MCF 10A (cell line): ENCODE measurements at regions of chr6 and their contacts with region 1.

Region 1: GRCh38 chr6:131923356-131923755 is 27.8 kb downstream of the CCN2 start:
- DNase-seq: peak; percentile 83
- H3K4me3 Mint-ChIP-seq: no peak overlapping the region
- H3K27ac Mint-ChIP-seq: no peak overlapping the region
- H3K4me1 Mint-ChIP-seq: peaks cover 6% of the 10 kb centered on the region
- H3K27me3 Mint-ChIP-seq: no peaks in the 10 kb centered on the region
- CTCF ChIP-seq: peak; percentile 54

Region 2: GRCh38 chr6:131875647-131876046 is 47.7 kb before region 1 on chr6:
- CTCF ChIA-PET with region 1: no interaction called
- POLR2A ChIA-PET with region 1: no interaction called
- intact Hi-C with region 1: no loop called
- DNase-seq: no peak
- H3K4me3 Mint-ChIP-seq: no peak overlapping the region
- H3K27ac Mint-ChIP-seq: no peak overlapping the region
- H3K4me1 Mint-ChIP-seq: no peaks in the 10 kb centered on the region
- H3K27me3 Mint-ChIP-seq: no peaks in the 10 kb centered on the region
- CTCF ChIP-seq: no peak

Region 3: DNA sequence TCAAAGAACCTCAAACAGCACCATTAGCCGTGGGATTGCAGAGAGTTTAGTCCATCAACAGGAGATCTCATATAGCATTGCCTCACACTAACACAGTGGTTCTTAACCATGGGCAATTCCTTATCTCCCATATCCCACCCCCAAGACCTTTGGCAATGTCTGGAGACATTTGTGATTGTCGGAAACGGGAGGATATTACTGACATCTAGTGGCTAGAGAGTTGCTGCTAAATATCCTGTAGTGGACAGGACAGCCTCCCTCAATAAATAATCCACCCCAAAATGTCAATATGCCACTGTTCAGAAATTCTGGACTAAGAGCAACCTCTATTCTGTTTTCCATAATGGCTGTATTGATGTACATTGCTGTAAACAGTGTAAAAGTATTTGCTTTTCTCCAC is 237.9 kb after region 1 on chr6:
- CTCF ChIA-PET with region 1: interaction called, 42 read pairs
- POLR2A ChIA-PET with region 1: interaction called, 3 read pairs
- intact Hi-C with region 1: loop called (anchors 1 kb)
- DNase-seq: peak; percentile 51
- H3K4me3 Mint-ChIP-seq: no peak overlapping the region
- H3K27ac Mint-ChIP-seq: no peak overlapping the region
- H3K4me1 Mint-ChIP-seq: no peaks in the 10 kb centered on the region
- H3K27me3 Mint-ChIP-seq: no peaks in the 10 kb centered on the region
- CTCF ChIP-seq: peak; percentile 57

Region 4: DNA sequence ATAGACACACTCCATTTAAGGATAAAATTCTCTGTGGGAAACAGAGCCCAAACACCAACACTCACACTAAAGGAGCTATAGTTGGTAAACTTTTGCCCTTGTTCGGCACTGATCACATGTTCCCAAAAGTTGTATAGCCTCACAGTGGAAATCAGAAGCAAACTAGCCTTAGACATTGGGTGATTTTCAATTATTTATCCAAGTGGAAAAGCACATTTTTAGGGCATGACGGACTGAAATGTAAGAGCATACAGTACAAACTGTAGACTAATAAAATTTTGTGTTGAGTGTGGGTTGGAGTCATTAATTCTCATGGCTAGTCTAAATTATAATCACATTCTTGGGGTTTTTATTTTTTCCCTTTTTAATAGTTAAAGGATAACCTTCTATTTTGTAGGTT is 275.5 kb after region 1 on chr6:
- CTCF ChIA-PET with region 1: interaction called, 12 read pairs
- POLR2A ChIA-PET with region 1: no interaction called
- intact Hi-C with region 1: no loop called
- DNase-seq: no peak
- H3K4me3 Mint-ChIP-seq: no peak overlapping the region
- H3K27ac Mint-ChIP-seq: no peak overlapping the region
- H3K4me1 Mint-ChIP-seq: peaks cover 14% of the 10 kb centered on the region
- H3K27me3 Mint-ChIP-seq: no peaks in the 10 kb centered on the region
- CTCF ChIP-seq: no peak

Region 5: GRCh38 chr6:132218059-132218696 is 294.8 kb after region 1 on chr6:
- CTCF ChIA-PET with region 1: interaction called, 59 read pairs
- POLR2A ChIA-PET with region 1: no interaction called
- intact Hi-C with region 1: loop called (anchors 1 kb)
- DNase-seq: peak; percentile 45
- H3K4me3 Mint-ChIP-seq: no peak overlapping the region
- H3K27ac Mint-ChIP-seq: no peak overlapping the region
- H3K4me1 Mint-ChIP-seq: no peaks in the 10 kb centered on the region
- H3K27me3 Mint-ChIP-seq: no peaks in the 10 kb centered on the region
- CTCF ChIP-seq: peak; percentile 38

Region 6: GRCh38 chr6:132259070-132259469 is 335.7 kb after region 1 on chr6:
- CTCF ChIA-PET with region 1: interaction called, 76 read pairs
- POLR2A ChIA-PET with region 1: no interaction called
- intact Hi-C with region 1: loop called (anchors 2 kb)
- DNase-seq: peak; percentile 30
- H3K4me3 Mint-ChIP-seq: no peak overlapping the region
- H3K27ac Mint-ChIP-seq: no peak overlapping the region
- H3K4me1 Mint-ChIP-seq: peaks cover 10% of the 10 kb centered on the region
- H3K27me3 Mint-ChIP-seq: no peaks in the 10 kb centered on the region
- CTCF ChIP-seq: peak; percentile 28

Region 7: GRCh38 chr6:132300323-132300949 is 377.1 kb after region 1 on chr6:
- CTCF ChIA-PET with region 1: interaction called, 13 read pairs
- POLR2A ChIA-PET with region 1: no interaction called
- intact Hi-C with region 1: loop called (anchors 1 kb)
- DNase-seq: peak; percentile 70
- H3K4me3 Mint-ChIP-seq: no peak overlapping the region
- H3K27ac Mint-ChIP-seq: no peak overlapping the region
- H3K4me1 Mint-ChIP-seq: no peaks in the 10 kb centered on the region
- H3K27me3 Mint-ChIP-seq: no peaks in the 10 kb centered on the region
- CTCF ChIP-seq: peak; percentile 74